ENCODE measurements at regions of chr3 and their contacts with region 1.

Region 1: GRCh38 chr3:132730891-132731580 is 8.8 kb upstream of the NPHP3 start:
- DNase-seq: no peak
- ATAC-seq: peak; percentile 78
- H3K4me3 ChIP-seq: no peak overlapping the region
- H3K27ac ChIP-seq: no peak overlapping the region
- H3K4me1 ChIP-seq: no peaks in the 10 kb centered on the region
- H3K27me3 ChIP-seq: no peaks in the 10 kb centered on the region

Region 2: GRCh38 chr3:133384331-133385027 is 653.4 kb after region 1 on chr3:
- intact Hi-C with region 1: loop called (anchors 5 to 10 kb)
- DNase-seq: peak in 1 of 2 donors; percentile 50
- ATAC-seq: peak; percentile 72
- H3K4me3 ChIP-seq: no peak overlapping the region
- H3K27ac ChIP-seq: no peak overlapping the region
- H3K4me1 ChIP-seq: no peaks in the 10 kb centered on the region
- H3K27me3 ChIP-seq: no peaks in the 10 kb centered on the region

Region 3: DNA sequence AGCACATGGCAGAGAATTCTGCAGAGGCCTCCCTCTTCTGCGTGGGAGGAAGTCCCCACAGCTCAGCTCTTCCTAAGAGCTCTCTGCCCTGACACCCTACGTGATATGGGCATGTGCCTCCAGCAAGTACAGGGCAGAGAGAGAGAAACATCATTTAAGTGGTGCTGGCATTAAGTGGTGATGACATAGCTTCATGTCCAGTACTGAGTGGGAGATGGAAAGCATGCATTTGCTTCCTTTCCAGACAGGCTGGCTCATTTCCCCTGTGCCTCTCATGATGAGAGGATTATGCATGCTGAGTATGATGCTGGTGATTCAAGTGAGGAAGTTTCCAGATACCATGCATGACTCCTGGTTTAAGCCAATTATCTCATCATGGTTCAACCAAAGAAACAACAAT is 695.7 kb after region 1 on chr3:
- intact Hi-C with region 1: loop called (anchors 2 to 5 kb)
- DNase-seq: no peak
- ATAC-seq: no peak
- H3K4me3 ChIP-seq: no peak overlapping the region
- H3K27ac ChIP-seq: no peak overlapping the region
- H3K4me1 ChIP-seq: no peaks in the 10 kb centered on the region
- H3K27me3 ChIP-seq: no peaks in the 10 kb centered on the region